Caco-2 (cell line): ENCODE measurements at regions of chr1 and their contacts with region 1.

Region 1: GRCh38 chr1:39266269-39266668 is 61.8 kb downstream of the MACF1 start:
- DNase-seq: peak in 1 of 2 experiments; percentile 12
- H3K4me3 ChIP-seq: no peak overlapping the region
- H3K4me3 Mint-ChIP-seq: no peak overlapping the region
- H3K27ac Mint-ChIP-seq: no peak overlapping the region
- H3K4me1 ChIP-seq: peaks cover 35% of the 10 kb centered on the region
- H3K4me1 Mint-ChIP-seq: peaks cover 33% of the 10 kb centered on the region
- H3K27me3 ChIP-seq: no peaks in the 10 kb centered on the region
- H3K27me3 Mint-ChIP-seq: no peaks in the 10 kb centered on the region
- CTCF ChIP-seq: peak in 1 of 2 experiments; percentile 9

Region 2: DNA sequence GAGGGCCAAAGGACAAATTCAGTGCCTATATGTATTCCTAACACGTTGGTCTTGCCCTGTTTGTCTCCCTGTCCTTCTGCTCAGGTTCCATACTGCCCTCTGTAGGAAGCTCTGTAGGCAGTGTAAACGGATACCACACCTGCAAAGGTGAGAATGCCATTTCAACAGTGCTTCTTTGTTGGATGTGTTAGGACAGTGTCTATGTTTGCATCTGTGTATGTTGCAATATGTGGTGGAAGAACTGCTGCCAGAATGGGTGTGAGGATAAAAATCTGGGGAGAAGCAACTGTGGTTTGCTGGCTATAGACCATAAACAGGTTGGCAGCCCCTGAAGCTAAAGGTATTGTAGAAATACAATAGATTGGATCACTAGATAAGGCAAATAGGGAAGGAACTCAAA is 112.1 kb after region 1 on chr1:
- CTCF ChIA-PET with region 1: interaction called, 3 read pairs
- POLR2A ChIA-PET with region 1: no interaction called
- intact Hi-C with region 1: loop called (anchors 2 kb)
- DNase-seq: peak; percentile 73 to 74
- H3K4me3 ChIP-seq: no peak overlapping the region
- H3K4me3 Mint-ChIP-seq: no peak overlapping the region
- H3K27ac Mint-ChIP-seq: no peak overlapping the region
- H3K4me1 ChIP-seq: peaks cover 5% of the 10 kb centered on the region; the same call in 1 of the 2 replicates
- H3K4me1 Mint-ChIP-seq: peaks cover 7% of the 10 kb centered on the region
- H3K27me3 ChIP-seq: no peaks in the 10 kb centered on the region
- H3K27me3 Mint-ChIP-seq: no peaks in the 10 kb centered on the region
- CTCF ChIP-seq: peak; percentile 51 to 69

Region 3: DNA sequence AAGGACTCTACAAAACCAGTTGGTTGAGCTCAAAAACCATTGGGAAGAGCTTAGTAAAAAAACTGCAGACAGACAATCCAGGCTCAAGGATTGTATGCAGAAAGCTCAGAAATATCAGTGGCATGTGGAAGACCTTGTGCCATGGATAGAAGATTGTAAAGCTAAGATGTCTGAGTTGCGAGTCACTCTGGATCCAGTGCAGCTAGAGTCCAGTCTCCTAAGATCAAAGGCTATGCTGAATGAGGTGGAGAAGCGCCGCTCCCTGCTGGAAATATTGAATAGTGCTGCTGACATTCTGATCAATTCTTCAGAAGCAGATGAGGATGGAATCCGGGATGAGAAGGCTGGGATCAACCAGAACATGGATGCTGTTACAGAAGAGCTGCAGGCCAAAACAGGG is 121.2 kb after region 1 on chr1:
- CTCF ChIA-PET with region 1: interaction called, 6 read pairs
- POLR2A ChIA-PET with region 1: no interaction called
- intact Hi-C with region 1: loop called (anchors 2 kb)
- DNase-seq: peak; percentile 71 to 72
- H3K4me3 ChIP-seq: no peak overlapping the region
- H3K4me3 Mint-ChIP-seq: no peak overlapping the region
- H3K27ac Mint-ChIP-seq: peak overlapping the region; percentile 71
- H3K4me1 ChIP-seq: peaks cover 21% of the 10 kb centered on the region
- H3K4me1 Mint-ChIP-seq: peaks cover 24% of the 10 kb centered on the region
- H3K27me3 ChIP-seq: no peaks in the 10 kb centered on the region
- H3K27me3 Mint-ChIP-seq: no peaks in the 10 kb centered on the region
- CTCF ChIP-seq: peak; percentile 43 to 44

Region 4: DNA sequence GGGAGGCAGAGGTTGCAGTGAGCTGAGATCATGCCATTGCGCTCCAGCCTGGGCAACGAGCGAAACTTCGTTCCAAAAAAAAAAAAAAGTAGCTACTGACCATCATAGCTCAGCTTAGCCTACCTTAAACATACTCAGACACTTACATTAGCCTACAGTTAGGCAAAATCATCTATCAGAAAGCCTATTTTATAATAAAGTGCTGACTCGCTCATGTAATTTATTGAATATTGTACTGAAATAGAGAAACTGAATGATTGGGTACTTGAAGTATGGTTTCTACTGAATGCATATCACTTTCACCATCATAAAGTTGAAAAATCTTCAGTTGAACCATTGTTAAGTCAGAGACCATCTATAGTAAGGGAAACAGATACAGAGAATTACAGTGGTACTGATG is 131.2 kb after region 1 on chr1:
- CTCF ChIA-PET with region 1: no interaction called
- POLR2A ChIA-PET with region 1: no interaction called
- intact Hi-C with region 1: no loop called
- DNase-seq: no peak
- H3K4me3 ChIP-seq: no peak overlapping the region
- H3K4me3 Mint-ChIP-seq: no peak overlapping the region
- H3K27ac Mint-ChIP-seq: no peak overlapping the region
- H3K4me1 ChIP-seq: peaks cover 32% of the 10 kb centered on the region
- H3K4me1 Mint-ChIP-seq: peaks cover 12% of the 10 kb centered on the region
- H3K27me3 ChIP-seq: no peaks in the 10 kb centered on the region
- H3K27me3 Mint-ChIP-seq: no peaks in the 10 kb centered on the region
- CTCF ChIP-seq: no peak